PC-9 (cell line): ENCODE measurements at regions of chr5 and their contacts with region 1.

Region 1: DNA sequence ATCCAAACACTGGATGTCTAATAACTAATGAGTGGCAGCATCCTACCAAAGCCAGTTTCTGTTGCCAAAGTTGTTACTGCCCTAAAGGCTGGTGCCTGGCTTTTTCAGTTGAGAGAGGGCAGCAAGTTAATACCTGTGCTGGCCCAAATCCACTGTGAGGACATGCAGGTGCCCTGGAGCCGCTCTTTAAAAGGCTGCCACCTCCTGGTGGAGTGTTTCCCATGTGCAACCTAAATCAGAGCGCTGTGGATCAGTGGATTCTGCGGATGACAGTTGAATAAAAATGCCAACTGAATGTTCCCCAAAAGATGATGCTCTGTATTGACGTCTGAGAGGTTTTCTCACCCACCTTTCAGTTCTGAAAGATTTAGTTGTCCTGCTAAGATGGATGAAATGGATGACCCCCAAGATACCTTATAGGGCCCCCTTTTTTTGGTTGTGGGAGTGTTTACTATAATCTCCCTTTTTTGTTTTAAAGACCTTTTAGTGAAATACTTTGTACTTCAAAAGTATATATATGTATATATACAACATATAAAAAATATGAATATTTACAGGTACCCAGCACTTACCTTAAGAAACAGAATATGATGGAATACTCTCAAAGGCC is 146.4 kb downstream of the EGFLAM start:
- DNase-seq: no peak
- H3K4me3 ChIP-seq: no peak overlapping the region
- H3K27ac ChIP-seq: no peak overlapping the region
- H3K4me1 ChIP-seq: no peaks in the 10 kb centered on the region
- H3K27me3 ChIP-seq: peaks cover 96% of the 10 kb centered on the region
- CTCF ChIP-seq: peak; percentile 49

Region 2: GRCh38 chr5:38208782-38209378 is 195.9 kb before region 1 on chr5:
- CTCF ChIA-PET with region 1: no interaction called
- POLR2A ChIA-PET with region 1: no interaction called
- intact Hi-C with region 1: loop called (anchors 10 kb)
- DNase-seq: peak; percentile 32 to 34
- H3K4me3 ChIP-seq: no peak overlapping the region
- H3K27ac ChIP-seq: no peak overlapping the region
- H3K4me1 ChIP-seq: no peaks in the 10 kb centered on the region
- H3K27me3 ChIP-seq: 0 out of 2 replicates have a peak, but pooled peaks cover 7% of the 10 kb centered on the region
- CTCF ChIP-seq: peak; percentile 63